Activated CD4-positive, alpha-beta T cell treated with anti-CD3 and anti-CD28 coated beads, Interleukin-2, amount 10 ng/mL, durations not matched to agents 24 days and 14 days (primary cell): ENCODE measurements at regions of chr12 and their contacts with region 1.

Region 1: DNA sequence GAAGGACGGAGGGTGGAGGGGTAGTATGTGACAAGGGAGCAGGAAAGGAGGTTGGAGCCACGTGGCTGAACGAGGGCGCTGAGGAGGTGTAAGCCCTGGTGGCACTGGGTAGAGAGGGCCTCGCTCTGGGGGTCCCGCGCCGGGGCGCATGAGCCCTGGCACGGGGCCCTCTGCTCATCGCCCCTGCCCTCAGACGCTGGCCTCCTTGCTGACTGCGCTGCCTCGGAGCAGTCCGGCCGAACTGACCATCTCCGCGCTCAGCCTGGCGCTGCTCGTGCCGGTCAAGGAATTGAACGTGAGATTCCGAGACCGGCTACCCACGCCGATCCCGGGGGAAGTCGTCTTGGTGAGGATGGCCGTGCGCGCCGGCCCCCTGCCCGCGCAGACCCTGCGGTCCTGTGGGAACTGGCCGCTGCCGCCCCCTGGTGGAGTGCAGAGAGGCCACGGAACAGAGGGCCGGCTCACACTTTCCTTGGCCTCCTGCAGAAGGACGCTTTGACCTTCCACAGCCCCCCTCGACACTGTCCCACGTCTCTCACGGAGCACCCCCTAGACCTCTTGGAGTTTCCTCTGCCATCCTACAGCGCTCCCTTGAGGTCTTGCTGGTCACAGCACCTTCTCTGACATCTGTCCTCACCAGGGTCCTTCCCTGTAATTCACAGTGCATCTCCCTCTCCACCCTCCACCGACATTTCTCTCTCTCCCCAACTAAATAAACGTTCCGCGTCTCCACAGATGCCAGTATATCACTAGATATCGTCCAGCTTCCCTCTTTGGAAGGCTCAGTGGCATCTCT is 10.5 kb downstream of the ARHGEF25 start:
- DNase-seq: peak; percentile 89
- H3K4me3 Mint-ChIP-seq: peak overlapping the region; percentile 88
- H3K27ac Mint-ChIP-seq: peak overlapping the region; percentile 43
- H3K4me1 Mint-ChIP-seq: peaks cover 22% of the 10 kb centered on the region
- H3K27me3 Mint-ChIP-seq: peaks cover 96% of the 10 kb centered on the region

Region 2: GRCh38 chr12:57583008-57583831 is 38.5 kb before region 1 on chr12:
- intact Hi-C with region 1: loop called (anchors 1 kb)
- DNase-seq: peak; percentile 92
- H3K4me3 Mint-ChIP-seq: no peak overlapping the region
- H3K27ac Mint-ChIP-seq: no peak overlapping the region
- H3K4me1 Mint-ChIP-seq: peaks cover 3% of the 10 kb centered on the region
- H3K27me3 Mint-ChIP-seq: peaks cover 10% of the 10 kb centered on the region

Region 3: GRCh38 chr12:57822392-57823130 is 200.9 kb after region 1 on chr12:
- intact Hi-C with region 1: no loop called
- DNase-seq: no peak
- H3K4me3 Mint-ChIP-seq: no peak overlapping the region
- H3K27ac Mint-ChIP-seq: peak overlapping the region; percentile 37
- H3K4me1 Mint-ChIP-seq: no peaks in the 10 kb centered on the region
- H3K27me3 Mint-ChIP-seq: no peaks in the 10 kb centered on the region